Right cardiac atrium (tissue), 5 donors: ENCODE measurements at regions of chr6 and their contacts with region 1.

Region 1: GRCh38 chr6:47780510-47781356 is 1.1 kb upstream of the OPN5 start:
- DNase-seq: peak in 1 of 3 donors; percentile 48
- ATAC-seq: peak; percentile 84 to 89
- H3K4me3 ChIP-seq: no peak overlapping the region
- H3K27ac ChIP-seq: no peak overlapping the region
- H3K4me1 ChIP-seq: no peaks in the 10 kb centered on the region
- H3K27me3 ChIP-seq: no peaks in the 10 kb centered on the region

Region 2: DNA sequence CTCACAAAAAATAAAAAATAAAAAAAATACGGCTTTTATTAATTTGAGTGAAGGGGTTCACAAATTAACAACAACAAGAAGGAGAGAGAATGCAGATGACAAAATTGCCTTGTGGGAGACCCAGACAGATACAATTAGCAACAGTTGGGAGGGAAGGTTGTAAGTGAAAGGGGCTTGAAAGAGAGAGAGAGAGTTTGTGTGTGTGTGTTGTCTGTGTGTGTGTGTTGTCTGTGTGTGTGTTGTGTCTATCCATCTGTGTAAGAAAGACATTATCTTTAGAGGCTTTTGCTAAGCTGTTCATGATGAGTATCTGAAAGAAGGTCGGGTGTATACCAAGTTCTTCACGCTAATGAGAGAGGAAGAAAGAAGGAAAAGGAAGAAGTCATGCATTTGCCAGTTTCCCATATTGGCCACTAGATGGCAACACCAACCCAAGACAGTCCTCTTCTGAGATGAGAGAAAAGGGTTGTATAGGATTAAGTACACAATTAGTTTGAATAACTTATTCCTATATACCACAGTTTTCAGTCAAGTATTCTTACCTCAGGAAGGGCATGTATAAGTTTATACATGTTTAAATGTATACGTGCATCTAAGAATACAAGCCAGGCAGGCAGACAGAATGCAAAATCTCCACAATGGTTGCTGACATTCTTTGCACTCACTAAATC is 366.8 kb before region 1 on chr6:
- intact Hi-C with region 1: loop called in 3 of 4 experiments (anchors 5 to 10 kb)
- DNase-seq: peak in 1 of 3 donors; percentile 11
- ATAC-seq: peak; percentile 89 to 90
- H3K4me3 ChIP-seq: peak overlapping the region; percentile 54
- H3K27ac ChIP-seq: no peak overlapping the region
- H3K4me1 ChIP-seq: no peaks in the 10 kb centered on the region
- H3K27me3 ChIP-seq: no peaks in the 10 kb centered on the region

Region 3: GRCh38 chr6:47631269-47631772 is 149.4 kb before region 1 on chr6:
- intact Hi-C with region 1: loop called (anchors 2 to 5 kb)
- DNase-seq: peak in 1 of 3 donors; percentile 46
- ATAC-seq: peak; percentile 70 to 71
- H3K4me3 ChIP-seq: no peak overlapping the region
- H3K27ac ChIP-seq: no peak overlapping the region
- H3K4me1 ChIP-seq: peaks cover 6% of the 10 kb centered on the region
- H3K27me3 ChIP-seq: no peaks in the 10 kb centered on the region